Mammary epithelial cell (primary cell): ENCODE measurements at regions of chr18 and their contacts with region 1.

Region 1: DNA sequence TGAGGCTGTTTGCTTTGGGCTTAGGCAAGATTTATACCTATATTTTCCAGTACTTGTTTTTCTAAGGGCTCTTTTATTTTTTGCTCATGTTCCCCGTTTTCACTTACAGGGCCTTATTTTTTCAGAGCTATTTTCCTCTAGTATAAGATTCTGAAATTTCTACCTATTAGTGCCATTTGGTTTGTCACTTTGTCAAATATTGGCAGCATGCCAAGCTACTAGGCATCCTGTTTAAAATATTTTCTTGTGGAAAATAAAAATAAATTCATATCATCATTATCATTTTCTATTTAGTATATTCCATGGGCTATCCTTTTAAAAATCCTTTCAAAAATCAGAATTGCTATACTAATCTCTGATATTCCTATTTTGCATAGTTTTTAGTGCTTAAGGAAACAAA is 64.8 kb upstream of the CHST9 start:
- DNase-seq: no peak
- H3K4me3 ChIP-seq: no peak overlapping the region
- H3K27ac ChIP-seq: no peak overlapping the region
- H3K4me1 ChIP-seq: no peaks in the 10 kb centered on the region
- H3K27me3 ChIP-seq: no peaks in the 10 kb centered on the region
- CTCF ChIP-seq: no peak

Region 2: GRCh38 chr18:27007880-27008279 is 242.1 kb before region 1 on chr18:
- CTCF ChIA-PET with region 1: no interaction called
- dilution Hi-C with region 1: no loop called
- in situ Hi-C with region 1: no loop called
- intact Hi-C with region 1: no loop called
- DNase-seq: peak; percentile 4
- H3K4me3 ChIP-seq: no peak overlapping the region
- H3K27ac ChIP-seq: no peak overlapping the region
- H3K4me1 ChIP-seq: no peaks in the 10 kb centered on the region
- H3K27me3 ChIP-seq: no peaks in the 10 kb centered on the region
- CTCF ChIP-seq: no peak

Region 3: GRCh38 chr18:27164905-27165304 is 85.0 kb before region 1 on chr18:
- CTCF ChIA-PET with region 1: no interaction called
- dilution Hi-C with region 1: no loop called
- in situ Hi-C with region 1: loop called in 1 of 2 experiments (anchors 10 kb)
- intact Hi-C with region 1: no loop called
- DNase-seq: no peak
- H3K4me3 ChIP-seq: no peak overlapping the region
- H3K27ac ChIP-seq: no peak overlapping the region
- H3K4me1 ChIP-seq: no peaks in the 10 kb centered on the region
- H3K27me3 ChIP-seq: peaks cover 2% of the 10 kb centered on the region
- CTCF ChIP-seq: no peak